Activated CD4-positive, alpha-beta memory T cell treated with anti-CD3 and anti-CD28 coated beads for 36 hours (primary cell): ENCODE measurements at regions of chr10 and their contacts with region 1.

Region 1: DNA sequence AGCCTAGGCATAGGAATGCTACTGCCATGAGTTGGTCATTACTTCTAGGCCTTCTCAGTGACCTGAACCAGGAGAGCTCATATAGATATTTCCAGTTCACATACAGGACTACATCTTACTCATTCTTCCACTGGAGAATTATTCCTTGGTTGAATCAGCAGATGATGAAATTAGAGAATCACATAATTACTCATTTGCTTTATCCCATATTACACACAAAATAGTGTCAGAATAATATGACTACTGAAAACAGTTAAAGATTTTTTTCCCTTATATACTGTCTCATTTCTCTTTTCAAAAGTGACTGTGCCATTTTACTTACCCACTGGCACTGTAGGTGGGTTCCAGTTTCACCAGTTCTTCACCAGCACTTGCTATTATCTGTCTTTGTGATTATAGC is 18.5 kb downstream of the BMS1 start:
- DNase-seq: peak; percentile 21
- H3K4me3 Mint-ChIP-seq: no peak overlapping the region
- H3K27ac Mint-ChIP-seq: peak overlapping the region; percentile 57
- H3K4me1 Mint-ChIP-seq: peaks cover 25% of the 10 kb centered on the region
- H3K27me3 Mint-ChIP-seq: no peaks in the 10 kb centered on the region

Region 2: DNA sequence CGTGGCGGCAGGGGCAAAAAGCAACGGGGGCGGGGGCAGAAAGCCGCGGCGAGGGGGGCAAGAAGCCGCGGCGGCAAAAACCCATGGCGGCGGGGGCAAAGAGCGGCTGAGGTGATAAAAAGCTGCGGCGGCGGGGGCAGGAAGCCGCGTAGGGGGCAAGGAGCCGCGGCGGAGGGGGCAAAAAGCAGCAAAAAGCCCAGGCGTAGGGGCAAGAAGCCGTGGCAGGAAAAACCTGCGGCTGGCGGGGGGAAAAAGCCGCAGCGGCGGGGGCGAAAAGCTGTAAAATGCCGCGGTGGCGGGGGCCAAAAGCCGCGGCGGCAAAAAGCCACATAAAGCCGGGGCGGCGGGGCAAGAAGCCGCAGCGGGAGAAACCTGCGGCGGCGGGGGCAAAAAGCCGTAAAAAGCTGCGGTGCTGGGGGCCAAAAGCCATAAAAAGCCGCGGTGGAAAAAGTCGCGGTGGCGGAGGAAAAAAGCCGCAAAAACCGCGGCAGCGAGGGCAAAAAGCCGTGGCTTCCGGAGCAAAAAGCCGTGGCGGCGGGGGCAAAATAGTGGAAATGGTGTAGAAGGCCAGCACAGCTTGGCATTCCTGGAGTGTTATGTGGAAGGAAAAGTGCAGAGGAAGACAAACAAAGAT is 650.6 kb before region 1 on chr10:
- CTCF ChIA-PET with region 1: no interaction called
- POLR2A ChIA-PET with region 1: no interaction called
- intact Hi-C with region 1: no loop called
- DNase-seq: no peak
- H3K4me3 Mint-ChIP-seq: no peak overlapping the region
- H3K27ac Mint-ChIP-seq: no peak overlapping the region
- H3K4me1 Mint-ChIP-seq: no peaks in the 10 kb centered on the region
- H3K27me3 Mint-ChIP-seq: peaks cover 2% of the 10 kb centered on the region

Region 3: GRCh38 chr10:42753126-42753506 is 48.0 kb before region 1 on chr10:
- CTCF ChIA-PET with region 1: interaction called, 4 read pairs
- POLR2A ChIA-PET with region 1: no interaction called
- intact Hi-C with region 1: loop called (anchors 1 kb)
- DNase-seq: peak; percentile 82
- H3K4me3 Mint-ChIP-seq: peak overlapping the region; percentile 66
- H3K27ac Mint-ChIP-seq: no peak overlapping the region
- H3K4me1 Mint-ChIP-seq: peaks cover 6% of the 10 kb centered on the region
- H3K27me3 Mint-ChIP-seq: peaks cover 44% of the 10 kb centered on the region

Region 4: DNA sequence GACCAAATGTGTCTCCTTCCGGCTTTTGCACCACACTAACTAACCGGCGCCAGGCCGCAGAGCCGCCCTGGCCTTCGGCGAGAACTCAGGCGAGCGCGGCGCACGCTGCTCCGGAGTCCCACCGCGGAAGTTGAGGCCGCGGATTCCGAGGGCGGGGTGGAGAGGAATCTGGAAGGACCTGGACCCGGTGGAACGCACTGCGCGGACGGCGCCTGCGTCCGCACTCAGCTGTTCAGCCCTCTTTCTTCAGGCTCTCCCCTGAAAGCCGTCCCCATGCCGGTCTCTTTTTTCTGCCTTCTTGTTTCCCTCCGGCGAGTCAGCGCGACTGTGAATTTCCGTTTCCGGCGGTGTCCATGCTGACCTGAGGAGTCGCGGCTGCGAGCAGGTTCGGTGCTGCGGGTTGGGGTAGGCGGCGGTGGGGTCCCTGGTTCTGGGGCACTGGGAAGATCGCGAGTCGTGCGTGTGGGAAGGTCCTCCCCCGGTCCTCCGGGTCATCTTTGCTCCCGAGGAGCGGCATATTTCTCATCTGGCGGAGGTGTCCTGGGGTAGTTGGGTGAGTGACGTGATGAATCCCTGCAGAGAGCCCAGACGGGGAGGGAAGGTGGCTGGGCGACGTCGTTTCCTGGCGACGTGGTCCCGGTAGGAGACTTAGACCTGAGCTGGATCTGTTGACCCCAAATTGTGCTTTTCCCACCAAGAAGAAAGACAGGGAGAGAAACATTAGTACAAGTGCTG is 18.5 kb before region 1 on chr10 and contains the start of gene BMS1:
- CTCF ChIA-PET with region 1: interaction called, 4 read pairs
- POLR2A ChIA-PET with region 1: no interaction called
- intact Hi-C with region 1: loop called (anchors 1 kb)
- DNase-seq: peak; percentile 94
- H3K4me3 Mint-ChIP-seq: peak within 1 kb of the TSS; percentile 85
- H3K27ac Mint-ChIP-seq: peak within 1 kb of the TSS; percentile 90
- H3K4me1 Mint-ChIP-seq: peaks cover 17% of the 10 kb centered on the region
- H3K27me3 Mint-ChIP-seq: peaks cover 1% of the 10 kb centered on the region
- total RNA-seq, gene BMS1: 25.5 to 25.9 TPM

Region 5: DNA sequence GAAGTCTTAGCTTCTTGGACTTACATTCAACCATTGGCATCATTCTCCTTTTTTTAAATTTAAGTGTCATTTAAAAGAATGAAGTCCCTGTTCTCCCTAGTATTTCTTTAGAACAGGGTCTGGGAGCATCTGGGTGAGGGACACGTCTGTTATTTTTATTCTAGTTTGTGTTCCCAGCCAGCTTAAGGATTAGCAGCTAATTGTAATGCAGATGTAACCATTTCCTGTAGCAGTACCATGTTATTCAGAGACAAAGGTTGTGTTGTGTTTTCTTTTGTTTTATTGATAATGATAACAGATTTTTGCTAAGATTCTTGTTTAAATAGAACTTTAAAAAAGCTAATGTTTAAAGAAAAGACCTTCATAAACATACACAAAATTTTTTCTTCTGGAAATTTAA is 15.8 kb after region 1 on chr10:
- CTCF ChIA-PET with region 1: no interaction called
- POLR2A ChIA-PET with region 1: no interaction called
- intact Hi-C with region 1: loop called (anchors 1 kb)
- DNase-seq: no peak
- H3K4me3 Mint-ChIP-seq: no peak overlapping the region
- H3K27ac Mint-ChIP-seq: no peak overlapping the region
- H3K4me1 Mint-ChIP-seq: peaks cover 19% of the 10 kb centered on the region
- H3K27me3 Mint-ChIP-seq: no peaks in the 10 kb centered on the region

Region 6: GRCh38 chr10:43160046-43160918 is 359.1 kb after region 1 on chr10:
- CTCF ChIA-PET with region 1: no interaction called
- POLR2A ChIA-PET with region 1: no interaction called
- intact Hi-C with region 1: loop called (anchors 1 kb)
- DNase-seq: peak; percentile 66
- H3K4me3 Mint-ChIP-seq: peak overlapping the region; percentile 20
- H3K27ac Mint-ChIP-seq: peak overlapping the region; percentile 89
- H3K4me1 Mint-ChIP-seq: peaks cover 60% of the 10 kb centered on the region
- H3K27me3 Mint-ChIP-seq: no peaks in the 10 kb centered on the region

Region 7: GRCh38 chr10:43361986-43362839 is 561.1 kb after region 1 on chr10:
- CTCF ChIA-PET with region 1: no interaction called
- POLR2A ChIA-PET with region 1: no interaction called
- intact Hi-C with region 1: loop called (anchors 10 kb)
- DNase-seq: peak; percentile 99
- H3K4me3 Mint-ChIP-seq: peak overlapping the region; percentile 98
- H3K27ac Mint-ChIP-seq: peak overlapping the region; percentile 98
- H3K4me1 Mint-ChIP-seq: peaks cover 20% of the 10 kb centered on the region
- H3K27me3 Mint-ChIP-seq: no peaks in the 10 kb centered on the region